ENCODE measurements at regions of chr2 and their contacts with region 1.

Region 1: DNA sequence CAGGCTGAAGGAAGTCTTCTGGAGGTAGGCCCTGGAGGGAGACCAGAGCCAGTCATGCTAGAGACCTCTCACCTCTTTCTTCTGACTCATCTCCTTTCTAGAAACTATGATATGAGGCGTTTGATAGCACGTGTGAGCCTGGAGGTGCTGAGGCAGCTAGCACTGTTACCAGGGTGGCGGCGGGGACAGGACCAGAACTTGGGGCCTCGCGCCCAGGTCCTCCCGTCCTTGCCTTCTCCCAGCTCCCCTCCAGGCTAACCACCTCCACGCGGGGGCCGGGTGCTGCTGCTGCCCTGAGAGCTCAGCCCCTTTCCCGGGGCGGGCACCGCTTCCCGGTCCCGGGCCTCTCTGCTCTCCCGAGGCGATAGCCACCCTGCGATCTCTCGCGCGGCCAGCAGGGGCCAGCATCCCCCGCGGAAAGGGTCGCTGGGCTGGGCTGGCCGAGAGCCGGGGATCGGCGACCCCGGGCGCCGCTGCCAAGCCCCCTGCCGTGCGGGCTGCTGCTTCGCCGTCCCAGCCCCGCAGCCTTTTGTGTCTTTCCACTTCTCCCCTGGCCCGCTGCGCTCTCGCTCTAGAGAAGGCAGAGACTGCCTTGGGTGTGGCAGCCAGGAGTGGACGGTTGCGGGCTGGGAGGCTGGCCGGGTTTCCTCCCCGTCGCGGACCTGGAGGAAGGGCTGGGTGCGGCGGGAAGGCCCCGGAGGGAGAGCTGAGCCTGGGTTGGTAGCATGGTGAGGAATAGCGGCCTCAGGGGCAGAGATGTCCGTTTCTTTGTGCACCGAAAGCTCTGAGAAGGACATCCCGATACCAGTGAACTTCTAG is 49.1 kb downstream of the TMEM17 start:
- DNase-seq: peak; percentile 79 to 85
- ATAC-seq: peak; percentile 91 to 96
- H3K4me3 ChIP-seq: peak overlapping the region; percentile 46
- H3K27ac ChIP-seq: peak overlapping the region; percentile 95 to 99
- H3K4me1 ChIP-seq: peaks cover 42% of the 10 kb centered on the region
- CTCF ChIP-seq: peak; percentile 99
- EP300 ChIP-seq: 0 out of 5 replicates have a peak, but pooled peaks of 1 of the 2 experiments have one; percentile 18
- POLR2A ChIP-seq: peak; percentile 28; the same call in 1 of the 2 replicates
- RAD21 ChIP-seq: peak; percentile 97 to 100

Region 2: GRCh38 chr2:62443886-62444285 is 13.0 kb before region 1 on chr2:
- CTCF ChIA-PET with region 1: interaction called, 73 read pairs
- POLR2A ChIA-PET with region 1: no interaction called
- DNase-seq: no peak
- ATAC-seq: peak in 1 of 2 experiments; percentile 57; a peak in 3 of 6 replicates
- H3K4me3 ChIP-seq: no peak overlapping the region
- H3K27ac ChIP-seq: no peak overlapping the region
- H3K4me1 ChIP-seq: no peaks in the 10 kb centered on the region
- CTCF ChIP-seq: no peak
- EP300 ChIP-seq: no peak
- POLR2A ChIP-seq: no peak
- RAD21 ChIP-seq: no peak; a peak in 1 of 5 replicates

Region 3: GRCh38 chr2:62489162-62489561 is 32.2 kb after region 1 on chr2:
- CTCF ChIA-PET with region 1: interaction called, 29 read pairs
- POLR2A ChIA-PET with region 1: no interaction called
- DNase-seq: no peak
- ATAC-seq: no peak
- H3K4me3 ChIP-seq: no peak overlapping the region
- H3K27ac ChIP-seq: peak overlapping the region in 1 of 2 experiments; percentile 23; a peak in 2 of 6 replicates
- H3K4me1 ChIP-seq: peaks cover 22% of the 10 kb centered on the region
- CTCF ChIP-seq: no peak
- EP300 ChIP-seq: no peak
- POLR2A ChIP-seq: no peak
- RAD21 ChIP-seq: no peak

Region 4: DNA sequence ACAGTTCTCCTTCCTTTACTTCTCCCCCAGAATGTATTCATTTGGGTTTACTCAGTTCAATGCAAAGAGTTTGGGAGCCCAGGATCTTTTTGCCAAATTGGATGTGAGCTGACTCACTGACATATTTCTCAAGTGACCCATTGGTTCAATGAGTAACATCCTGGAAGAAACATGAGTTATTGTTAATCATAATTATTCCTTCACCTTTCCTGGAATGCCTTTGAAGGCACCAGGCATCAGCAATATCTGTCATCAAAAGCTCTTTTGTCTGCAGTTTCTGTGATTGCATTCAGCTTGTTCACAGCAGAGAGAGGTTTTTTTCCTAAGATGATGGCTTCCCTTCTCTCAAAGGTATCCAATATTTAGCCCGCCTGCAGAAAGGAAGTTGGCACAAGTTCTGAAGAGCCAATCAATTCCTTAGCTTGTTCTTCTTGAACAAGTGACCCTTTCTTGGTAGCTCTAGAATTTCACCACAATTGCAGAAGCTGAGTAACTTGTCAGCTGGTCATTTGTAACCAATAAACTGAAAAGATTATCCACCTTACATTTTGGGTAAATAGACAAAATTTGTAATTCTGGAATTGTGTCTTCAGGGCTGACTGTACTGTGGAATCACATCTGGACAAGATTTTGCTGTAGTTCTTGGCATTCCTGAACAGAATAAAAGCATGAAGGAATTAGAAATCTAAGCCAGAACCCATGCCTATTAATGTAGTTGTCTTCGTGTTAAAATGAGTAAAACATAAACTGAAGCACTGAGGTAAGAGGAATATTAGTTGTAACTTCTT is 121.3 kb after region 1 on chr2:
- CTCF ChIA-PET with region 1: interaction called, 22 read pairs
- POLR2A ChIA-PET with region 1: interaction called, 12 read pairs
- DNase-seq: peak; percentile 72 to 94
- ATAC-seq: peak; percentile 80 to 87
- H3K4me3 ChIP-seq: 0 out of 3 replicates have a peak overlapping the region, but pooled peaks have one; percentile 13
- H3K27ac ChIP-seq: peak overlapping the region; percentile 94 to 96
- H3K4me1 ChIP-seq: peaks cover 41% of the 10 kb centered on the region
- CTCF ChIP-seq: no peak
- EP300 ChIP-seq: peak; percentile 99; a peak in 4 of 5 replicates
- POLR2A ChIP-seq: no peak
- RAD21 ChIP-seq: peak; percentile 45 to 80

Region 5: GRCh38 chr2:62604336-62604735 is 147.4 kb after region 1 on chr2:
- CTCF ChIA-PET with region 1: no interaction called
- POLR2A ChIA-PET with region 1: no interaction called
- DNase-seq: peak in 1 of 2 experiments; percentile 36
- ATAC-seq: no peak
- H3K4me3 ChIP-seq: no peak overlapping the region
- H3K27ac ChIP-seq: peak overlapping the region in 1 of 2 experiments; percentile 12; a peak in 1 of 6 replicates
- H3K4me1 ChIP-seq: peaks cover 12% of the 10 kb centered on the region; the same call in 2 of the 3 replicates
- CTCF ChIP-seq: no peak
- EP300 ChIP-seq: no peak
- POLR2A ChIP-seq: no peak
- RAD21 ChIP-seq: no peak

Region 6: GRCh38 chr2:62738981-62739936 is 282.3 kb after region 1 on chr2:
- CTCF ChIA-PET with region 1: interaction called, 10 read pairs
- POLR2A ChIA-PET with region 1: no interaction called
- DNase-seq: no peak
- ATAC-seq: no peak
- H3K4me3 ChIP-seq: no peak overlapping the region
- H3K27ac ChIP-seq: peak overlapping the region; percentile 46 to 57; a peak in 5 of 6 replicates
- H3K4me1 ChIP-seq: peaks cover 78% of the 10 kb centered on the region
- CTCF ChIP-seq: no peak
- EP300 ChIP-seq: no peak
- POLR2A ChIP-seq: no peak
- RAD21 ChIP-seq: no peak

Region 7: DNA sequence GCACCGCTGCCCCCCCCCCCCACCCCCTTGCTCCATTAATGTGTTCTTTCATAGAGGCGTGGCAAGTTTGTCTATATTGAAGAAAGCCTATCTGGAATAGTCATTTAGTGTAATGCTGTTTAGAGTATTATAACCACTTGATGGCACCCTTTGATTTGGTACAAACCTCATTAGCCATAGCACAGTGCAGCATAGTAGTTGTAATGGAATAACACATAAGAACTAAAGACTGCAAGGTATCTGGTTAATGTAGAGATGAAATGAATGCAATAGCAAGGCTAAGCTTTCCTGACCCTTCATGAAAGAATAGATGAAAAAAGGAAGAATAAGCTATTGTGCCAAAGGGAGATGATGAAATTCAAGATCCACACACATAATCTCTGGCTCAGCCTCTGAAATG is 330.5 kb after region 1 on chr2:
- CTCF ChIA-PET with region 1: interaction called, 30 read pairs
- POLR2A ChIA-PET with region 1: no interaction called
- DNase-seq: peak in 1 of 2 experiments; percentile 50
- ATAC-seq: peak; percentile 88
- H3K4me3 ChIP-seq: no peak overlapping the region
- H3K27ac ChIP-seq: peak overlapping the region; percentile 5 to 35; a peak in 2 of 6 replicates
- H3K4me1 ChIP-seq: peaks cover 80% of the 10 kb centered on the region
- CTCF ChIP-seq: peak; percentile 69
- EP300 ChIP-seq: no peak
- POLR2A ChIP-seq: no peak
- RAD21 ChIP-seq: peak; percentile 78 to 79